ENCODE measurements at regions of chr1 and their contacts with region 1.

Region 1: DNA sequence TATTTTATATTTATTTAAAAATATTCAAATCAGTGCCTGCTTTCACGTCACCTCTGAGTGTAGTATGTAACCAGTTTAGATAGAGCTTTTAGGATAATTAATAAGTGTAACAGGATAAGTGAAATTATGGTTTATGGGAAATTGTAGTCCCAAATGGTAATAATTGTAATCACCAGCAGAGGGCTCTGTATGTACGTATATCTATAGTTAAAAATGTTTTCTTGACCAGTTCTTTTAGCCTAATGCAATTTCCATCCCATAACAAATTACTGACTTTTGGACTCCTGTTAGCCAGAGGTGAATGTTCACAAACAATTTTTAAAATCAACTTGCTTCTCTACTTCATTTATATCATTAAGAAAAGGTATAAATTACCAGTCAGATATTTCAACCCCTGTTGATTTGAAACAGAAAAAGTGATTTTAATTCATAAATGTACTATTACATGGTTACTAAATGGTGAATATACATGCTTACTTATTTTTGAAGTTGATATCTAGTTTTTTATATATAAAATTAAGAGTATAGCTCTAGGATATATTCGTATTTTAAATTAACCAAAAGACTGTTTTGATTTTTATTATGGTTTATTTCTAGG is 25.3 kb downstream of the SLC30A7 start:
- DNase-seq: no peak
- ATAC-seq: no peak
- H3K4me3 ChIP-seq: no peak overlapping the region
- H3K27ac ChIP-seq: no peak overlapping the region
- H3K4me1 ChIP-seq: no peaks in the 10 kb centered on the region
- H3K27me3 ChIP-seq: no peaks in the 10 kb centered on the region
- CTCF ChIP-seq: peak; percentile 54 to 75 (median 62)
- POLR2A ChIP-seq: no peak

Region 2: DNA sequence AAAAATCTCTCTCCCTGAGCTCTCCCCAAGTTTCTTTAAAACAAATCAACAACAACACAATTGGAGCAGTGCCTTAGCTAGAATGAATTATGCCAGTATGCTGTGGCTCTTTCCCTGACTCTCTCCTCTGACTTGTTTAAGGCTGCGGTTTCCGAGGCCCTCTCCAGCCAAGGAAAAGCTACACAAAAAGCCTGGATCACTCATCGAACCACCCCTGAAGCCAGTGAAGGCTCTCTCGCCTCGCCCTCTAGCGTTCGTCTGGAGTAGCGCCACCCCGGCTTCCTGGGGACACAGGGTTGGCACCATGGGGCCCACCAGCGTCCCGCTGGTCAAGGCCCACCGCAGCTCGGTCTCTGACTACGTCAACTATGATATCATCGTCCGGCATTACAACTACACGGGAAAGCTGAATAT is 317.5 kb after region 1 on chr1:
- in situ Hi-C with region 1: no loop called
- intact Hi-C with region 1: loop called (anchors 2 kb)
- DNase-seq: peak; percentile 52 to 55
- ATAC-seq: peak; percentile 34 to 66
- H3K4me3 ChIP-seq: peak overlapping the region; percentile 63 to 87 (median 73)
- H3K27ac ChIP-seq: peak overlapping the region; percentile 68 to 79 (median 79)
- H3K4me1 ChIP-seq: peaks cover 9 to 26% of the 10 kb centered on the region in 2 donors
- H3K27me3 ChIP-seq: peaks cover 30 to 34% (median 33%) of the 10 kb centered on the region in 3 donors
- CTCF ChIP-seq: peak; percentile 62 to 87 (median 82)
- POLR2A ChIP-seq: peak in 1 of 2 donors; percentile 18

Region 3: DNA sequence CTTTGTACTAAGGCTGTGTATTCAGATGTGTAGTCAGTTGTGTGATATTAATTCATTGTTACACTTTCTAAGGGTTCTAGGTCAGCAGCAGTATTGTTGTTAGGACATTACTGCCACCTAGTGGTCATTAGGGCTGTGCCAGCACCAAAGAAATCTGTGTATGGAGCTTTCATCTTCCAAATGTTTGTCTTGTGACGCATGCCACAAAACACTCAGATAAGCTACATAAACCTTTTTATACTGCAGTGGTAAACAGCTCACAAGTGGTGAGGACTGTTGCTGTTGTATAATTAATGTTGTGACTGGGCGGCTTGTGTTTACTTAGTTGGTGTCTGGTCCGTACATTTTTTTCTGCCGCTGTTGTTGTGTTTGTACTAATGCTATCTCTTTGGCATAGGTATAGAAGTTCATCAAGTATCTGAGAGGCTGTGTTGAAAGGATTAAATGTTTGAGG is 367.3 kb after region 1 on chr1:
- in situ Hi-C with region 1: loop called in 3 of 4 experiments (anchors 5 kb)
- intact Hi-C with region 1: loop called (anchors 1 kb)
- DNase-seq: peak; percentile 14 to 27
- ATAC-seq: peak; percentile 68
- H3K4me3 ChIP-seq: no peak overlapping the region
- H3K27ac ChIP-seq: no peak overlapping the region
- H3K4me1 ChIP-seq: no peaks in the 10 kb centered on the region
- H3K27me3 ChIP-seq: no peaks in the 10 kb centered on the region
- CTCF ChIP-seq: peak; percentile 69 to 88 (median 72)
- POLR2A ChIP-seq: no peak

Region 4: GRCh38 chr1:101357444-101357986 is 436.3 kb after region 1 on chr1:
- in situ Hi-C with region 1: no loop called
- intact Hi-C with region 1: loop called (anchors 5 kb)
- DNase-seq: peak; percentile 13 to 21
- ATAC-seq: peak; percentile 83 to 90
- H3K4me3 ChIP-seq: no peak overlapping the region
- H3K27ac ChIP-seq: no peak overlapping the region
- H3K4me1 ChIP-seq: no peaks in the 10 kb centered on the region
- H3K27me3 ChIP-seq: no peaks in the 10 kb centered on the region
- CTCF ChIP-seq: peak; percentile 43 to 82 (median 62)
- POLR2A ChIP-seq: no peak

Measured in gastrocnemius medialis (tissue), 4 donors.